Panc1 (cell line): ENCODE measurements at regions of chr1 and their contacts with region 1.

Region 1: DNA sequence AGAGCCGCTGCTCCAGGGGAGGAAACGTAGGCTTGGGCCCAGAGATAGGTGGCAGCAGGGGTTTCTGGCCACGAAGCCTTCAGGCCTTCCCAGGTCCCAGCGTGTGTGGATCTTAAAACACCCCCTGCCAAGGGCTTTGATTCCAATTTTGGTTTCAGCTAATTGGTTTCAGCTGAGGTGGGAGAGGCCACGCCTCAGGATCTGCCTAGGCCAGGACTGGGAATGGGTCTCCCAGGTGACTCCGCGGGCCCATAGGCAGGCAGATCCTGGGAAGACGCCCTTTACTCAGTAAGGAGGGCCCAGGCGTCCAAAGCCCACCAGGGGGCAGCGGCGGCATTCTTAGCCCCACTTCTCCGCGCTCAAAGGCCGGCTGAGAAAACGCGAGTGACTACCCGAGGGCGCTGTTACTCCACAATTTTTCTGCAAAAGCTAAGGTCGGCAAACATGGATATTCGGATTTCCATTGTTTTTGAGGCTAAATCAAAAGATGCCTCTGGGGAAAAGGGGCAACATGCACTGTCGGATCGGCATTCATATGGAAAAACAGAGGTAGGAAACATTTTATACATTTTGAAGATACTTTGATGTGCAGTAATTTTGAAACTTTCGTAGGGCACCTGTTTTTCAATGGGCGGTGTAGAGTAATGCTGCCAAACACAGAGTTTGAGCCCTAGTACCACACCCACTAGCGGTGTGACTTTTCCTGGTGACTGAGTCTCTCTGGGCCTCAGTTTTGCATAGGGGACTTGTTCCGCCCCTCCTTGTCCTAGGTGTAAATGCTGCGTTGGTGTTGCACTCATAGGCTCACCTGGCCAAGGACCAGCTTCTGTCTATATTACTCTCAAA is 31.8 kb upstream of the BCL10 start:
- DNase-seq: peak; percentile 91
- ATAC-seq: peak; percentile 98
- H3K4me3 ChIP-seq: no peak overlapping the region
- H3K27ac ChIP-seq: peak overlapping the region; percentile 79
- H3K4me1 ChIP-seq: peaks cover 14% of the 10 kb centered on the region
- H3K27me3 ChIP-seq: no peaks in the 10 kb centered on the region
- CTCF ChIP-seq: peak; percentile 100

Region 2: GRCh38 chr1:85344256-85344694 is 36.1 kb after region 1 on chr1:
- CTCF ChIA-PET with region 1: interaction called, 3 read pairs
- POLR2A ChIA-PET with region 1: interaction called, 7 read pairs
- in situ Hi-C with region 1: loop called (anchors 5 kb)
- intact Hi-C with region 1: no loop called
- DNase-seq: no peak
- ATAC-seq: peak; percentile 94
- H3K4me3 ChIP-seq: no peak overlapping the region
- H3K27ac ChIP-seq: peak overlapping the region; percentile 90
- H3K4me1 ChIP-seq: peaks cover 49% of the 10 kb centered on the region
- H3K27me3 ChIP-seq: no peaks in the 10 kb centered on the region
- CTCF ChIP-seq: peak; percentile 99

Region 3: DNA sequence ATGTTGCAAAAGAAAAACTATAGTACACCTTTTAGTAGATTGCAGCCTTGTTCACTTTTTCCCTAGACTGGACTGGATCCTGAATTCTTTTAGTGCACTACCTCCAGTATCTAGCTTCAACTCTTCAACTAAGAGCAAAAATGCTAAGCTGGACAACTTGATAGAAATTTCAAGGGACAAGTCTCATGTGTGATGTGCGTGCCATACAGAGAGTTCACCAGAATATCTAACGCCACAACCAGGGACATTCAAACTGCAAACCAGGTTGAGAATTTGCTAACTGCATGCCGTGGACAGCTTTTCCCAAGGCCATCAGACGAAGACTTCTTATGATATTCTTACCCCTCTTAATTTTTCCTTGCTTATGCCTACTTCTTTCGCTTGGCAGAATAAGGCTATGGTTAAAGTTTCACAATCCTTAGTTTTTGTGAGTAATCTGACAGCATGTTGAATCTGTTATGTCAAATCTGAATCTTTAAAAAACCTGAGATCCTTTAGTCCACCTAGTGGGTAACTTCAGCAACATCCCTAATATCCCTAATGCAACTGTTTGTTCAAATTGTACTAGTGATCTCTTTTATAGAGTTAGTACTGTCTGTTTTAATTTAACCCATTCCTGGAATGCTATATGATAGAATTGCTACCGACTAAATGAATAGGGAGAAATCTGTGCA is 90.3 kb after region 1 on chr1:
- CTCF ChIA-PET with region 1: interaction called, 3 read pairs
- POLR2A ChIA-PET with region 1: no interaction called
- in situ Hi-C with region 1: no loop called
- intact Hi-C with region 1: loop called (anchors 5 kb)
- DNase-seq: peak; percentile 27
- ATAC-seq: peak; percentile 71
- H3K4me3 ChIP-seq: no peak overlapping the region
- H3K27ac ChIP-seq: 0 out of 2 replicates have a peak overlapping the region, but pooled peaks have one; percentile 24
- H3K4me1 ChIP-seq: peaks cover 23% of the 10 kb centered on the region
- H3K27me3 ChIP-seq: no peaks in the 10 kb centered on the region
- CTCF ChIP-seq: peak; percentile 70

Region 4: DNA sequence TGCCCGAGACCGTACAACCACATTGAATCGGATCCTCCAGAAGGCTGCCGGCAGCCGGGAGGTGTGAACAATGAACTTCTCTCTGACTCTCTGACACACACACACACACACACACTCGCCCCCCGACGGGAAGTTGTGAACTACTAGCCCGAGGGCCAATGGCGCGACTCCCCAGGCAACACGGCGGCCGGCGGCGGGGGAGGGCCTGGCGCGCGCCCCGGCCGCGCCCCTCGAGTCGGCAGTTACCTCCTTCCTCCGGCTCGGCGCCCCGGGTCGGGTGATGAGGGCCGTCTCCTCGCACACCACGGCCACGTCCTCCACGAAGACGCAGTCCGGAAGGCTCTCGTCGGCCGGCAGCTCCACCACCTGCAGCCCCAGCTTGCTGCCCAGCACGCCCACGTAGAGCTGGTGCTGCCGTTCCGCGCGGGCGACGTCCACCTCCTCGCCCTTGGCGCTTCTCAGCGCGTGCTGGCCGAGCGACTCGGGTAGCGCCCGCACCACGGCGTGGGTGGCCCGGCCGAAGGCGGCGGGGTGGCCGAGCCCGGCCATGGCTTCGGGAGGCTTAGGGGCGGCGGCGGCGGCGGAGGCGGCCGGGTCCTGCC is 156.4 kb after region 1 on chr1:
- CTCF ChIA-PET with region 1: no interaction called
- POLR2A ChIA-PET with region 1: no interaction called
- in situ Hi-C with region 1: no loop called
- intact Hi-C with region 1: loop called (anchors 5 kb)
- DNase-seq: no peak
- ATAC-seq: peak; percentile 86
- H3K4me3 ChIP-seq: peak overlapping the region; percentile 80 to 82
- H3K27ac ChIP-seq: peak overlapping the region; percentile 94
- H3K4me1 ChIP-seq: peaks cover 48% of the 10 kb centered on the region
- H3K27me3 ChIP-seq: no peaks in the 10 kb centered on the region
- CTCF ChIP-seq: 0 out of 2 replicates have a peak, but pooled peaks have one; percentile 5

Region 5: DNA sequence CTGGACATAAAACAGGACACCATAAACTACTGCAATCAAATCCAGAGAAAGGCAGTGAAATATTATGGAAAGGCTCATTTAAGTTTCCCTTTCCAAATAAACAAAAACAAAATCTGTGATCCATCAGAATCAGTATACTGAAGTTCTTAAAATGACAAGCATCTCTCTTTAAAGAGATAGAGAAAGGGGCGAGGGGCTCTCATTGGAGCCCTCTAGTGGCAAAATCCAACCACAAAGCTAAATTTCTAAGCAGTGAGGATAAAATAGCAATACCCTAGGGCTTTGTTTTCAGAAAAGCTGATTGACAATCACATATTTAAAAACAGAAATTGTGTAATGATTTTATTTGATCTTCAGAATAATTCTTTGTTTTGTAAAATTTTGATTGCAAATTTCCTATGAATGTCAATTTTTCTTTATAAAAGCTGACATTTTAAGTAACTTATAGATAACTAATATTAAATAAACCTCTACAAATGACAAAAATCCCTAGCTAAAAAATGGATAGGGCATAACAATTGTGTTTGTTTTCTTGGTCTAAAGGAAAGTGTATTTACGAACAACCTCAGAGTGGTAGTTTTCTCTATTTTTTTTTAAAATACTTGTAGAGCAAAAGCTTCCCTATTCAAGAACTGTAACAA is 710.2 kb after region 1 on chr1:
- CTCF ChIA-PET with region 1: no interaction called
- POLR2A ChIA-PET with region 1: no interaction called
- in situ Hi-C with region 1: no loop called
- intact Hi-C with region 1: loop called (anchors 2 kb)
- DNase-seq: peak; percentile 54
- ATAC-seq: peak; percentile 88
- H3K4me3 ChIP-seq: no peak overlapping the region
- H3K27ac ChIP-seq: no peak overlapping the region
- H3K4me1 ChIP-seq: no peaks in the 10 kb centered on the region
- H3K27me3 ChIP-seq: peaks cover 4% of the 10 kb centered on the region; the same call in 1 of the 2 replicates
- CTCF ChIP-seq: peak; percentile 96; the same call in 1 of the 2 replicates